Esophagus muscularis mucosa (tissue), 4 donors: ENCODE measurements at regions of chr22 and their contacts with region 1.

Region 1: DNA sequence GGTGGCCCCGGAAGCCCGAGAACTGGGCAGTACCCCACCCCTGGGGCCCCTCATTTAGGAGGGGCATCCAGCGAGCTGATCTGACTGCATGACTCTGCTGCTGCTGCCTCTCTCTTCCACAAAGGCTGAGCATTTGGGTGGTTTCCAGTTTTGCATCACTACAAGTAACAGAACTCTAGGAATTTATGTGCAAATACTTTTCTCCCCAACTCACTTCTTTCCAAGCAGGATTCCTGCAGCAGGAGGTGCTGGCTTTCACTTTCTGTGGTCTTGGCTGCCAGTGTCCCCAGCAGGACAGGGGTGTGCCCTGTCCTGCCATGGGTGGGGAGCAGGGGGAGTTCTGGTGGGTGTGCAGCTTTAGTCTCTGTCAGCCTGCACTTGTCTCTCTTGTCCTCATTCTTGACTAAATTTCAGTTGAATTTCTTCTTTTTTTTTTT is 21.2 kb downstream of the UPB1 start:
- DNase-seq: no peak
- H3K4me3 ChIP-seq: peak overlapping the region in 1 of 4 donors; percentile 3
- H3K27ac ChIP-seq: no peak overlapping the region
- H3K4me1 ChIP-seq: peaks cover 8 to 25% (median 18%) of the 10 kb centered on the region in 4 donors
- H3K27me3 ChIP-seq: peaks cover 0 to 4% (median 0%) of the 10 kb centered on the region in 4 donors
- CTCF ChIP-seq: no peak
- EP300 ChIP-seq: no peak
- POLR2A ChIP-seq: no peak

Region 2: DNA sequence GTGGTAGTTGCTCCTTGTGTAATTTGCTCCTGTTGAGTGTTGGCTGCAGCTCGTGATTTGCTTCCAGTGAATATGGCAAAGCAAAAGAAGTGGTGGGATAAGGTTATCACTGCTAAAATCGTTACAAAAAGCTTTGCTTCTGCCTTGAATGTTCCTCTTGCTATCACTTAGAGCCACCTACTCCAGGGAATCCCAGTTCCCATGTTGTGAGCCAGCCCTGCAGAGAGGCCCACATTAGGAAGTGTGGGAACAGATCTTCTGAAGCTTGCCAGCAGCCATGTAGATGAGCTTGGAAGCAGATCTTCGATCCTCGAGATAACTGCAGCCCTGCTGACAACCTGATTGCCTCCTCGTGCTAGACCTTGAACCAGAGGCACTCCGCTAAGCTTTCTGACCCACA is 174.7 kb before region 1 on chr22:
- intact Hi-C with region 1: loop called (anchors 10 kb)
- DNase-seq: no peak
- H3K4me3 ChIP-seq: no peak overlapping the region
- H3K27ac ChIP-seq: no peak overlapping the region
- H3K4me1 ChIP-seq: peaks cover 5 to 13% (median 10%) of the 10 kb centered on the region in 4 donors
- H3K27me3 ChIP-seq: no peaks in the 10 kb centered on the region
- CTCF ChIP-seq: no peak
- EP300 ChIP-seq: no peak
- POLR2A ChIP-seq: no peak